IMR-90 (cell line): ENCODE measurements at regions of chr2 and their contacts with region 1.

Region 1: DNA sequence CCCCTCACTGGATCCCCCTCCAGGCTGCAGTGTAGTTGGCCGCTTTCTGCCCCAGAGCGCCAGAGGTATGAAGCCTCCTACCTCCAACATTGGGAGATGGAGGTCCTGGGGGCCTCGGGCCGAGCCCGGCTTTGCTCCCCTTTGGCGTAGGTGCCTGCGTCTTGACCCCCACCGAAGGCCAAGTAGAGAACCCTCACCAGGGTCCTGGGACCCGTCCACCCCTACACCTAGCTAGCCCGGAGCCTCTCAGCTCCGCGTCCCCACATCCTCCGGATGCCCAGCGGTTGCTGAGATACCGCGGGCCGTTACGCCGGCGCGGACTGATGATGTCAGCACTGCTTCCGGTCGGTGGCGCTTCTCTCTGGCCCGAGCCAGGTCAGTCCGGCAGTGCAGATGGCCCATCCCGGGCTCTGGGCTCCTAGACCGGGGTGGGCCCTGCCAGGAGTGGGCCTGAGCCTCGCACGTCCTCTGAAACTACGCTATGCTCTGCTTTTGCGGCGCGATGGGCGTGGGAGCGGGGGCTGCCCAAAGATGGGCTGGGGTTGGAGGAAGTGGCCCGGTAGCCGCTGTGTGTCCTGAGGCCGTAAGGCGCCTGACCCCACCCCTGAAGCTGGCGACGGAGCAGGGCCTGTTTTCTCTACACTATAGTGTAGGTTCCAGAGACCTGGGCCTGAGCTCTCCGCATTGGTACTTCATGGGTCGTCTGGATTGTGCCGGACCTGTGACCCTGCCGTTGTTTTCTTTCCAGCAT is at the starts of genes GLB1L and STK16:
- DNase-seq: peak; percentile 92
- ATAC-seq: peak; percentile 83
- H3K4me3 ChIP-seq: peak within 1 kb of the TSS; percentile 89
- H3K27ac ChIP-seq: peak within 1 kb of the TSS; percentile 94
- H3K4me1 ChIP-seq: peaks cover 23% of the 10 kb centered on the region
- H3K27me3 ChIP-seq: no peaks in the 10 kb centered on the region
- CTCF ChIP-seq: peak; percentile 9; the same call in 1 of the 2 replicates
- POLR2A ChIP-seq: peak; percentile 95
- RAD21 ChIP-seq: no peak; the same call in 1 of the 2 replicates
- total RNA-seq, gene GLB1L: 3.6 and 4.1 TPM in 2 replicates
- total RNA-seq, gene STK16: 35.0 and 44.4 TPM in 2 replicates

Region 2: DNA sequence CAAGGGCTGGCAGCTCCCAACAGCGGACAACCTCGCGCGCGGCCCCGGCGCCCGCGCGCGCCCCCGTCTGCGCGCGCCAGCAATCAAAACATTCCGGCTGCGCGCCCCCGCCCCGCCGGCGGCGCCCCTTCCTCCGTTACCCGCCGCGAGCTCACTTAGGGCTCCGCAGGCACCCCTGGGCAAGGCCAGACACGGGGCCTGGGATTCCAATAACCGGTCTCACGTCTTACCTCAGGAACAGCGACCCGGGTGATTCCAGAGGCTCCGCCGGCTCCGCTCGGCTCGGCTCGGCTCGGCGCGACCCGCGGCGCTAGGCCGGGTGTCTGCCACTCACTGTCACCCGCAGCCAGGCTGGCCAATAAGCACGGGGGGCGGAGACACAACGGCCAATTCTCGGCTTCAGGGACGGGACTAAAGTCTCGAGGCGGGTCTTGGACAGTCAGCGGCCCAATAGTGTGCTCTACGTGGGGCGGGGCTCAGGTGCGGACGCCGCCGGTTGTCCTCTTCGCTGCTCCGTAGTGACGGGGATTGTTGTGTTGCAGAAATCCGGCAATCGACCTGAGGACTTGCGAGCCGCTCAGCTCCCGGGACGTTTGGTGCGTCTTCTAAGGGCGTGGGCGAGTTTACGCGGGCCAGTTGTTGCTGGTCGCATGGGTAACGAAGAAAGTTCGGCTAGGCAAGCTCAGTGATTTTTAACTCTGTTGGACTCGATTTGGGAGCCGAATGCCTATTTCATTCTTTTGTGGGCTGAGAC is 15.8 kb before region 1 on chr2 and contains the starts of genes ANKZF1 and ATG9A:
- CTCF ChIA-PET with region 1: interaction called, 3 read pairs
- POLR2A ChIA-PET with region 1: interaction called, 18 read pairs
- dilution Hi-C with region 1: no loop called
- in situ Hi-C with region 1: no loop called
- intact Hi-C with region 1: no loop called
- DNase-seq: peak; percentile 98
- ATAC-seq: peak; percentile 99
- H3K4me3 ChIP-seq: peak within 1 kb of the TSS; percentile 79
- H3K27ac ChIP-seq: peak within 1 kb of the TSS; percentile 86
- H3K4me1 ChIP-seq: peaks cover 5% of the 10 kb centered on the region
- H3K27me3 ChIP-seq: no peaks in the 10 kb centered on the region
- CTCF ChIP-seq: no peak
- POLR2A ChIP-seq: peak; percentile 87
- RAD21 ChIP-seq: no peak
- total RNA-seq, gene ANKZF1: 18.3 and 18.6 TPM in 2 replicates
- total RNA-seq, gene ATG9A: 27.8 and 35.1 TPM in 2 replicates